Gastrocnemius medialis (tissue), 4 donors: ENCODE measurements at regions of chr5 and their contacts with region 1.

Region 1: GRCh38 chr5:173144200-173145176 is at the start of gene BNIP1:
- DNase-seq: peak; percentile 77 to 91
- ATAC-seq: peak; percentile 89 to 93
- H3K4me3 ChIP-seq: peak within 1 kb of the TSS; percentile 73 to 98 (median 84)
- H3K27ac ChIP-seq: peak within 1 kb of the TSS; percentile 83 to 91 (median 86)
- H3K4me1 ChIP-seq: peaks cover 3 to 11% of the 10 kb centered on the region in 2 donors
- H3K27me3 ChIP-seq: no peaks in the 10 kb centered on the region
- CTCF ChIP-seq: peak; percentile 86 to 92 (median 87)
- POLR2A ChIP-seq: peak; percentile 33 to 51
- total RNA-seq, gene BNIP1: 9.2 to 21.6 (median 17.1) TPM

Region 2: GRCh38 chr5:173010547-173011464 is 133.7 kb before region 1 on chr5:
- in situ Hi-C with region 1: no loop called
- intact Hi-C with region 1: loop called (anchors 2 kb)
- DNase-seq: peak; percentile 64 to 72
- ATAC-seq: peak; percentile 80 to 86
- H3K4me3 ChIP-seq: no peak overlapping the region
- H3K27ac ChIP-seq: peak overlapping the region; percentile 52 to 79 (median 68)
- H3K4me1 ChIP-seq: peaks cover 30 to 42% of the 10 kb centered on the region in 2 donors
- H3K27me3 ChIP-seq: no peaks in the 10 kb centered on the region
- CTCF ChIP-seq: peak in 4 of 5 experiments; percentile 33 to 66 (median 52)
- POLR2A ChIP-seq: no peak

Region 3: DNA sequence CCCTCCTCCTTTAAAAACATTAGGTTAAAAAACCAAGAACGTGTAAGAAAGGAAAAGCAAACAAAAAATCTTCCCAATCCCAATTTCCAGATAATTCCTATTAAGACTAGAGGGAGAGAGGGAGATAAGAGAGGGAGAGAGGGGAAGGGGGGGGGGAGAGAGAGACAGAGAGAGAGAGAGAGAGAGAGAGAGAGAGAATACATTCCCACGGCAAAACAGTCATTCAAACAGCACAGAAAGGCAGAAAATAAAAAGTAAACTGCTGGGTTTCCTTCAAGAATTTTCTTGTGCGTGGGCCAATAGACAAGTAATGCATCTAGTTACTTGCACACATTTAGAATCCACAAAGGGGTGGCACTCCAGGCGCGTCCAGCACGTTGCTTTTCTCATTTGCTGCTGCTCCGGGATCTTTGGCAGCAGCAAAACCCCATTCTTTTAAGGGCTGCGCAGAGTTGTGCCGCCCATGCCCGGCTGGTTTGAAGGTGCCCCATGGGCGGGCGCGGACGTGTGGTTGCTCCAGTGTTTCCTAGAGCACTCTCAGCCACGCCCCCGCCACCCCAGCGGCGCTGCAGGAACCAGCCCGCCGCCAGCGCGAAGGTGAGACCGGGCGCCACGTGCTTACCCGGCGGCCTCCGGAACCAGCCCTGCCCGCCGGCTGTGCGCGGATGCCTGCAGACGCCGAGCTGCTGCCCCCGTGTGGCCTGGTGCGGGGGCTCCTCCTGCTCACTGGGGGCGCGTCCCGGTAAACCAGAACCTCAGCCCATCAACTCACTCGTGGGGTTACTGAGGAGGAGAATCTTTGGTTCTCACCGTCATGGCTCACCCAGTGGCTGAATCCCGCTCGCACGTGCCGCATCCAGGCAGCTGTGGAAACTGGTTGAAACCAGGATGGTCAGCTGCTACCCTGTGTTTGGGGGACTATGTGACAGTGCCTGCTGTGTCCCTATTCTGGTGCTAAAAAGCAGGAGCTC is 139.1 kb after region 1 on chr5:
- in situ Hi-C with region 1: no loop called
- intact Hi-C with region 1: loop called (anchors 10 kb)
- DNase-seq: peak; percentile 14 to 55
- ATAC-seq: peak in 1 of 2 donors; percentile 88
- H3K4me3 ChIP-seq: peak overlapping the region in 2 of 4 donors; percentile 2 to 31
- H3K27ac ChIP-seq: no peak overlapping the region
- H3K4me1 ChIP-seq: peaks cover 4 to 6% of the 10 kb centered on the region in 2 donors
- H3K27me3 ChIP-seq: peaks cover 16 to 26% (median 21%) of the 10 kb centered on the region in 3 donors
- CTCF ChIP-seq: peak in 4 of 5 experiments; percentile 54 to 66 (median 60)
- POLR2A ChIP-seq: no peak

Region 4: DNA sequence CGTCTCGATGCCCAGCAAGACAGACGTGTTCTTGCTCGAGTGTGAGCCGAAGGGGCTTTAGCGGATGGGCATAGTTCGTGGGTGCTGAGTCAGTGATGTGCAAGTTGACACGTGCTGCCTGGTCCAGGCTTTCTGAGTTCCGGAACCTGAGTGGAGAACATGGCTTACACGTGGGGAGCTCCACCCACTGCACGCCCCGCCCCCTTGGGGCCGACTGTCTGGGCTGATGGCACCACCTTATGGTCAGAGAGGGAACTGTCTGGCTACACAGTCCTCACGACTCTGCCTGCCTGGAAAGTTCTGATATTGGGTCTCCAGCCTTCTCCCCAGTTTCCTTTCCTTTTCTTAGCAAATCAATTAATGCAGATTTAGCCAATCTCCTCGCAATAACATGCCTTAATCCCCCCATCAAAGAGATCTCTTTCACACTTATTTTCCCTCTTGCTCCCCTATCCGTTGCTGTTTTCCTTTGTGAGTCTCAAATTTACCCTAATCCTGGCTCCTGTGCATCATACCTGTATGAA is 187.5 kb after region 1 on chr5:
- in situ Hi-C with region 1: no loop called
- intact Hi-C with region 1: loop called (anchors 10 kb)
- DNase-seq: peak; percentile 49 to 82
- ATAC-seq: peak; percentile 47
- H3K4me3 ChIP-seq: no peak overlapping the region
- H3K27ac ChIP-seq: no peak overlapping the region
- H3K4me1 ChIP-seq: peaks cover 8 to 27% of the 10 kb centered on the region in 2 donors
- H3K27me3 ChIP-seq: no peaks in the 10 kb centered on the region
- CTCF ChIP-seq: peak; percentile 84 to 93 (median 90)
- POLR2A ChIP-seq: no peak